Activated naive CD4-positive, alpha-beta T cell treated with anti-CD3 and anti-CD28 coated beads for 36 hours (primary cell): ENCODE measurements at regions of chr16 and their contacts with region 1.

Region 1: GRCh38 chr16:46973207-46973995 is at the start of gene DNAJA2:
- DNase-seq: peak; percentile 92
- H3K4me3 Mint-ChIP-seq: peak within 1 kb of the TSS; percentile 93
- H3K27ac Mint-ChIP-seq: peak within 1 kb of the TSS; percentile 98
- H3K4me1 Mint-ChIP-seq: peaks cover 62% of the 10 kb centered on the region
- H3K27me3 Mint-ChIP-seq: no peaks in the 10 kb centered on the region
- total RNA-seq, gene DNAJA2: 56.9 to 59.9 TPM

Region 2: DNA sequence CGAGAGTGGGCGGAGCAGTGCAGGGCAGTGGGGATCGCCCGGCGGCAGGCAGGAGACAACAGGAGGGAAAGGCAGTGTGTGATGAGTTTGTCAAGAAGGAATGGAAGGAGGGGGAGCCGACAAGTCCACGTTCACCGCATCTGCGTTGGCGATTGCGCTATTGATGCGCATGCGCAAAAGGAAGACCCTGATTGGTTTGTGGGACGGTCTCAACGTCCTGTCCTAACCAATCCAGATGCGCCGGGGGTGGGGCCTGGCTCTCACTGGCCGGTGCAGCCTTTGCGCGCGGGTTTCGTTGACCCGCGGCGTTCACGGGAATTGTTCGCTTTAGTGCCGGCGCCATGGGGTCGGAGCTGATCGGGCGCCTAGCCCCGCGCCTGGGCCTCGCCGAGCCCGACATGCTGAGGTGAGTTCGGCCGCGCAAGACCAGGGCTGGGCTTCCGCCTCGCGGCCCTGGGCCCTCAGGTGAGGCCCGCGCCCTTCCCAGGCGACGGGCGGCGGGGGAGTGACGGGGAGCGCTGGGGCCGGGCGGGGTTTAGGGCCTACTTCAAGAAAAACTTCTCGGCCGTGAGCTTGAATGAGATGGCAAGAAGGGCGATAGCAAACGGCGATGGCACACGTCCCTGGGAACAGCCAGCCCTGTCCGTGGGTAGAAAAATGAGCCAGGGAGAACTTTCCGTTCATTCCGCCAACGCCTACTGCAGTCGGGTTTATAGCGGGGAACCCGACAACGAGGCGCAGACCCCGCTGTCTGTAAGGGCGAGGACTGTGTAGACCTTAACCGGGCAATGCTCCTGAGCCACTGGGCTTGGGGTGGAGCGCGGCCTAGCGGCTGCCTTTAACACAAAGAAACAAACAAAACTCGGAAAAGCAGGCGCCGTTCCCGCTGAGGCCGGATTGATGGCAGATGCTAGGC is 283.8 kb before region 1 on chr16 and contains the start of gene ORC6:
- CTCF ChIA-PET with region 1: no interaction called
- intact Hi-C with region 1: loop called (anchors 1 kb)
- DNase-seq: peak; percentile 98
- H3K4me3 Mint-ChIP-seq: no peak within 1 kb of the TSS
- H3K27ac Mint-ChIP-seq: peak within 1 kb of the TSS; percentile 64
- H3K4me1 Mint-ChIP-seq: peaks cover 47% of the 10 kb centered on the region
- H3K27me3 Mint-ChIP-seq: no peaks in the 10 kb centered on the region
- total RNA-seq, gene ORC6: 57.7 to 61.9 TPM

Region 3: DNA sequence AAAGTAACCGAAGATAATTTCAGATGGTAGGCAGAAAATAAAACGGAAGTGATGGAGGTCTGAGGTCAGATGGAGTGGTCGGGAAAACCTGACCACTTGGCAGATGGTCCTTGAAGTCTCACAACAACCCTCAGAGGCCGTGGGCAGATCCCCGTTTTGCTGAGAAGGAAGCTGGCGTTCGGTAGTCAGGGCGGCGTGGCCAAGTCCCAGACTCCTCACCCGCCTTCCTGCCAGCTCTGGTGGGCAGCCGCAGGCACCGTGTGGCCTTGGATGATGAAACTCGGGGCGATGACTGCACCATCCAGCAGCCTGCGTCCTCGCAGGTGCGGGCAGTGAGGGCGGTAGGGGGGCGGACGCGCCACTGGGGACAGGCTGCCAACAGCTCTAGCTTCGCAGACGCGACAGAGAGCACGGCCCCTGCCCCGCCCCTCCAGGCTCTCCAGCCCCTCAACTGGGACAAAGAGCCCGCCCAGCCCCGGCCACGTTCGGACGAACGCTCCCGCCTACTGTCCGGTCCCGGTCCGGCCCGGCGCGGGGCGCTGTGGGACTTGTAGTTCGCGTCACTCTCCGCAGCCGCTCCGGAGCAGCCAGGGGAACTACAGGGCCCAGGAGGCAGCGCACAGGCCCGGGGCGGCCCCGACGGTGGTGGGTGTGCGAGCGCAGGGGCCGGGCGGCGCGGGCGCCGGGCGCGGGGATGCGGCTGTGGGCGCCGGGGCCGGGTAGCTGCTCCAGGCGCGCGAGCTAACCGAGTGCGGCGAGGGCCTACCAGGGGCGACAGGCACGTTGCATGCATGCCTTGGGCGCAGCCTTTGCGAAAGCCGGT is 89.5 kb before region 1 on chr16 and contains the start of gene GPT2:
- CTCF ChIA-PET with region 1: no interaction called
- intact Hi-C with region 1: loop called (anchors 2 kb)
- DNase-seq: peak; percentile 80
- H3K4me3 Mint-ChIP-seq: peak within 1 kb of the TSS; percentile 78
- H3K27ac Mint-ChIP-seq: peak within 1 kb of the TSS; percentile 68
- H3K4me1 Mint-ChIP-seq: peaks cover 9% of the 10 kb centered on the region
- H3K27me3 Mint-ChIP-seq: peaks cover 19% of the 10 kb centered on the region
- total RNA-seq, gene GPT2: 15.5 to 18.6 TPM

Region 4: DNA sequence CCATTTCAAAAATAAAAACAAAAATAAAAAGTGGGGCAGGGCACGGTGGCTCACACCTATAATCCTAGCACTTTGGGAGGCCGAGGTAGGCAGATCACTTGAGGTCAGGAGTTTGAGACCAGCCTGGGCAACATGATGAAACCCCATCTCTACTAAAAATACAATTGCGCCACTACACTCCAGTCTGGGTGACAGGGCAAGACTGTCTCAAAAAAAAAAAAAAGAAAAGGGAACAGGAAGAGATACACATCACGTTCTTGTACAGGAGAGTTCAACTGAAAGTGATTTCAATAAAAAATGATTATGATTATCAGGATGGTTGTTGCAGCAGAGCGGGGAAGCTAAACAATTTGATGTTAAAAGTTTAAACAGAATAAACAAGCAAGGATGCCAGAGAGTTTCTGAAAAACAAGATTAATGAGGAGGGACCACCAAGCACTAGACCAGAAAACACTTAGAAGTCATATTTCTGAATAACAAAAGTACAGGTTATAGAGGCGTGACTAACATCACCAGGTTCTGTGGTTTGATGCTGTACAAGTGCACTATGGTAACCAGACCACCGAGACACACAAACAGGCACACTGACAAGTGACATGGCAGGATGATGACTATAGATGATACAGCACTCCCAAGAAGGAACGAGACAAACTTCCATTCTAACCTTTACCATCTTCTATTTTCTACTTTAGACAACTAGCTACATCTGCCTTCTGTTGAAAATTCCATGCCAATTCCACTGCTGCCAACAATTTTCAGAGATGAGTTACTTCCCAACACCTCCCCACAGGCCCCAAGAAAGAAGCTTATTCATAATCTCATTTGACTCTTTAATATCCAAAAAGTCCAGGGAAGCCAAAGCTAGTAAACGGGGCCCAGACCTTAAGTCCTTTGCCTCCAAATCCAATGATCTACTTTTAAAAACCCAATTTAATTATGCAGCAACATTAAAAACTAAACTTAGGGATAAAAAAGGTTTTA is 11.7 kb before region 1 on chr16:
- CTCF ChIA-PET with region 1: no interaction called
- intact Hi-C with region 1: loop called (anchors 1 kb)
- DNase-seq: peak; percentile 40
- H3K4me3 Mint-ChIP-seq: no peak overlapping the region
- H3K27ac Mint-ChIP-seq: peak overlapping the region; percentile 78
- H3K4me1 Mint-ChIP-seq: peaks cover 43% of the 10 kb centered on the region
- H3K27me3 Mint-ChIP-seq: no peaks in the 10 kb centered on the region

Region 5: DNA sequence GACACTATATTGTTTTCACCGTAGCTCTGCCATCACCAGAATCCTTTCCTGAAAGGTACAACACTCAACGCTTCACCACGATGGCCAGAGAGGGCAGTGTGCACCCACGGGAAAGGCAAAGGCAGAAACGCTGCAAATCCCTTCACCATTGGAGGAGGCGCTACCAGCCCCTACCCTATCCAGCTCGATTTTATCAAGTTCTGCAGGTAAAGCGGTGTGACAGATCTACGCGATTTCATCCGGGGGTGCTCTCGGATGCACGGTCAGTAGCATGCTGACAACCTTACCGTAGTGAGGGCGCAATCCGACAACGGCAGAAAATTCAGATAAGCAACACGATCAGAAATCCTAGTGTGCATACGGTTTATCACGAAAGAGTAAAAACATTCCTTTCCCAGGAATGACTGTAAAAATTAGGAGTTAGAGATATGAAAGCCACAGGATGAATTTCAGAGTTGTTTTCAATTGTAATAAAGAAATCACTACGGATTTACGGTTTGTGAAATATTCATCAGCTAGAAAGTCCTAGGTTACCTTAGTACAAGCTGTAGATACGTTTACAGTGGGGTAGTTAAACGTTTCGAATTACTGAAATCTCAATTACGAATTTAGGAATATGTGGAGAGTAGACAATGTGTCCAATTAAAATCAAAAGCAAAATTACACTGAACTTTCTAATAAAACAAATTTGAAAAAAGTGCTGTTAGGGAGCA is 168.5 kb after region 1 on chr16:
- CTCF ChIA-PET with region 1: interaction called, 4 read pairs
- intact Hi-C with region 1: loop called (anchors 2 kb)
- DNase-seq: peak; percentile 93
- H3K4me3 Mint-ChIP-seq: peak overlapping the region; percentile 75
- H3K27ac Mint-ChIP-seq: no peak overlapping the region
- H3K4me1 Mint-ChIP-seq: peaks cover 10% of the 10 kb centered on the region
- H3K27me3 Mint-ChIP-seq: peaks cover 38% of the 10 kb centered on the region

Region 6: GRCh38 chr16:48156790-48157209 is 1183.4 kb after region 1 on chr16:
- CTCF ChIA-PET with region 1: no interaction called
- intact Hi-C with region 1: loop called (anchors 1 kb)
- DNase-seq: peak; percentile 91
- H3K4me3 Mint-ChIP-seq: no peak overlapping the region
- H3K27ac Mint-ChIP-seq: no peak overlapping the region
- H3K4me1 Mint-ChIP-seq: peaks cover 26% of the 10 kb centered on the region
- H3K27me3 Mint-ChIP-seq: peaks cover 26% of the 10 kb centered on the region

Region 7: GRCh38 chr16:48609652-48610029 is 1636.2 kb after region 1 on chr16:
- CTCF ChIA-PET with region 1: no interaction called
- intact Hi-C with region 1: loop called (anchors 2 kb)
- DNase-seq: peak; percentile 40
- H3K4me3 Mint-ChIP-seq: peak overlapping the region; percentile 85
- H3K27ac Mint-ChIP-seq: peak overlapping the region; percentile 89
- H3K4me1 Mint-ChIP-seq: peaks cover 37% of the 10 kb centered on the region
- H3K27me3 Mint-ChIP-seq: no peaks in the 10 kb centered on the region